Lower leg skin (tissue), 4 donors: ENCODE measurements at regions of chr20 and their contacts with region 1.

Region 1: DNA sequence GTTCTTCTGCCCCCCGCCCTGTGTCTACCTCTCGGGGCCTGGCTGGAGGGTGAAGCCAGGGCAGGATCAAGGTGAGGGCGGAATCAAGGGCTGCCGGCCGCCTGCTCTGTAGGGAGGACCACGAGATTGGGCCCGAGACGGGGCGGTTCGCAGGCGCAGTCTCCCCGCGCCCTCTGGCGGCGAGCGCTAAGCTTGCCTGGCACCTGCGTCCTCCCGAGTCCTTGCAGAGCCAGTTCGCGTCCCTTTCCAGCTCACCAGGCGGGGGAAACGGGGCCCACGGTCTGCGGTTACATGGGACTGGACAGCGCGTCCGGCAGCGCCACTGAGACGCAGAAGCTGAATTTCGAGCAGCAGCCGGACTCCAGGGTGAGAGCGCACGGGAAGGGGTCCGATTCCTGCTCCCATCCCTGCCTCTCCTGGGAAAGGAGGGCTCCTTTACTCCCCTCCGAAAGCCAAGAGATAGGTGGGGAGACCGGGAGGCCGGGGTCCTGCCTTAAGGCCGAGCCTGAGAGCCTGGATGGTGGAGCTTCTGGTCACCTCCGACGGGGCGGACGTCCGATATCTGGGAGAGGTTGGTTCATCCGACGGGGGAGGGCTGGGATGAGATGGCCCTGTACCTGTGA is 3.6 kb upstream of the MATN4 start:
- DNase-seq: peak in 1 of 2 donors; percentile 92
- H3K4me3 ChIP-seq: no peak overlapping the region
- CTCF ChIP-seq: peak in 1 of 3 donors; percentile 34
- POLR2A ChIP-seq: no peak

Region 2: GRCh38 chr20:45765980-45766379 is 454.3 kb after region 1 on chr20:
- intact Hi-C with region 1: loop called (anchors 10 kb)
- DNase-seq: no peak
- H3K4me3 ChIP-seq: no peak overlapping the region
- CTCF ChIP-seq: no peak
- POLR2A ChIP-seq: no peak